ENCODE measurements at regions of chr12 and their contacts with region 1.

Region 1: GRCh38 chr12:93972411-93973208 is 175.8 kb upstream of the PLXNC1 start:
- DNase-seq: no peak
- CTCF ChIP-seq: no peak

Region 2: GRCh38 chr12:93638095-93638494 is 334.5 kb before region 1 on chr12:
- CTCF ChIA-PET with region 1: no interaction called
- POLR2A ChIA-PET with region 1: no interaction called
- DNase-seq: no peak
- CTCF ChIP-seq: no peak

Region 3: DNA sequence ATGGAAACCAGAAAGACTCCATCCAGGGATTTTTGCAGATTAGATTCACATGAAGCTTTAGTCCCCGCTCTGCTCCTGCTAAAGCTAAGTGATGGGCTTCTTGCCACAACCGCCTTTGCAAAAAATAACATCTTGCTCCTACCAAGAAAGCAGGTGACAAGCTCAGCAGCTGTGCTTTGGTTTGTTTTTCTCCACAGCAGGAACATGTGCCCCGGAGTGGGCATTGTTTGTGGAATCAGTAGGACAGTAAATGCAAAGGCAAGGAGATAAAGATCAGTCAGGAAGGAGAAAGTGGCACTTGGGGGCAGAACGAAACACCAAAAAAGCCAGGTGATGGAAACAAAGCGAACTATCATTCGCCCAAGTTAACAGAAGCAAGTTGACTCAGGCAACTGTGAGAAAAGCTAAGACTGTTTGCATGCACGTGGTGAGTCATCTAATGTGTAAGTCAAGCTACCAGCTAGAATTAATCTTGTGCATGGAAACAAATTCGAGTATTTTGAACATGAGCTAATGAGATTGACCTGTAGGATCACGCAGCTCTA is 10.2 kb after region 1 on chr12:
- CTCF ChIA-PET with region 1: interaction called, 14 read pairs
- POLR2A ChIA-PET with region 1: no interaction called
- DNase-seq: no peak
- CTCF ChIP-seq: no peak